Pancreas (tissue), 10 donors: ENCODE measurements at regions of chr9 and their contacts with region 1.

Region 1: DNA sequence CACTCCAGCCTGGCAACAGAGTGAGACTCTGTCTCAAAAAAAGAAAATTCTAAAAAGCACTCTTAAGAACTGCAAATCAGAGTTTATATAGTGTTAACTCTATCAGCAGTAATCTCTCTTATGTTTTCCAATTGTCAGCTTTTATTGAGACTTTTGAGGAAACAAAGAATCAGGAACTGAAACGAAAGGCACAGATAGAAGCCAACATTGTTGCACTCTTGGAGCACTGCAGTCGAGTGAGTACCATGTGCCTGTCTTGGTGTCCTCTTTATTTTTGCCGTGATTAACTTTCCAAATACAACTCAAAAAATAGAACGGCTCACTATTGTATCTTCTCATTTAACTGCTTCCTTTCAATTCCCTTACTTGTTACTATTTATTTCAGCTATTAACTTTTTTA is 41.7 kb upstream of the LRRC19 start:
- DNase-seq: no peak
- ATAC-seq: no peak
- H3K4me3 ChIP-seq: no peak overlapping the region
- H3K27ac ChIP-seq: no peak overlapping the region
- H3K4me1 ChIP-seq: no peaks in the 10 kb centered on the region
- H3K27me3 ChIP-seq: no peaks in the 10 kb centered on the region
- CTCF ChIP-seq: no peak

Region 2: DNA sequence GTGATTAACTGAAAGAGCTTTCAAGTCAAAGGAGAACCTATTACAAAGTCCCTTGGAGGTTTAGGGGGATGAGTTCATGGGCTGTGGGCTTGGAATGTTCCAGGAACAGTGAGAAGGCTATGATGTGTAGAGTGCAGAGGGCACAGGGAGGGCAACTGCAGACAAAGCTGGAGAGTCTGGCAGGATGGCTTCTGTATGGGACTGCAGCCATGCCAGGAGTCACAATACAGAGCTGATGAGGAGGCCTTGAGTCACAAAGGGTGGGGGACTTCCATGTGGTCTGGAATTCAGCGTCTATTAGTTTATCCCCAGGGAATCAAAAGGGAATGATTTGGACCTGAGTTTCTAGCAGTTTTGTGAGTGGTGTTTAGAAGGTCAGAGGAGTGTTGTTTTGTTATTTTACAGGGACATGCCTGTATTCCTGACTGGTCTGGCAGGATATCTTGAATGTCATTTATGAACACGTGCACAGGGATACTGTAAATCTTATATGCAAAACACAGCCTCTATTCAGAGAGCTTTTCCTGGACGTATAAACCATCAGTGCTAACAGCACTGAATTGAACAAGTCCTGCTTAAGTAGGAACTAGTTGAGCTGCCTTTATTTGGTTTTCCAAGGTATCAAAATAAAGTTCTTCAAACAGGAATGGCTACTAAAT is 47.6 kb after region 1 on chr9:
- intact Hi-C with region 1: loop called in 1 of 3 experiments (anchors 5 kb)
- DNase-seq: no peak
- ATAC-seq: no peak
- H3K4me3 ChIP-seq: no peak overlapping the region
- H3K27ac ChIP-seq: no peak overlapping the region
- H3K4me1 ChIP-seq: no peaks in the 10 kb centered on the region
- H3K27me3 ChIP-seq: no peaks in the 10 kb centered on the region
- CTCF ChIP-seq: no peak